Dorsolateral prefrontal cortex (tissue), 120 donors: ENCODE measurements at regions of chr9 and their contacts with region 1.

Region 1: GRCh38 chr9:127402401-127403090 is 5.6 kb downstream of the SLC2A8 start:
- DNase-seq: peak in 6 of 10 donors; percentile 40 to 73 (median 52)
- H3K4me3 ChIP-seq: peak overlapping the region in 3 of 59 donors; percentile 1 to 21 (median 6)
- H3K27ac ChIP-seq: peak overlapping the region in 53 of 59 donors; percentile 10 to 91 (median 72)
- H3K27me3 ChIP-seq: no peaks in the 10 kb centered on the region
- CTCF ChIP-seq: no peak

Region 2: GRCh38 chr9:127233550-127233949 is 169.0 kb before region 1 on chr9:
- intact Hi-C with region 1: loop called in 1 of 2 experiments (anchors 5 kb)
- DNase-seq: no peak
- H3K4me3 ChIP-seq: no peak overlapping the region
- H3K27ac ChIP-seq: peak overlapping the region in 7 of 59 donors; percentile 2 to 36 (median 15)
- H3K27me3 ChIP-seq: no peaks in the 10 kb centered on the region
- CTCF ChIP-seq: no peak

Region 3: DNA sequence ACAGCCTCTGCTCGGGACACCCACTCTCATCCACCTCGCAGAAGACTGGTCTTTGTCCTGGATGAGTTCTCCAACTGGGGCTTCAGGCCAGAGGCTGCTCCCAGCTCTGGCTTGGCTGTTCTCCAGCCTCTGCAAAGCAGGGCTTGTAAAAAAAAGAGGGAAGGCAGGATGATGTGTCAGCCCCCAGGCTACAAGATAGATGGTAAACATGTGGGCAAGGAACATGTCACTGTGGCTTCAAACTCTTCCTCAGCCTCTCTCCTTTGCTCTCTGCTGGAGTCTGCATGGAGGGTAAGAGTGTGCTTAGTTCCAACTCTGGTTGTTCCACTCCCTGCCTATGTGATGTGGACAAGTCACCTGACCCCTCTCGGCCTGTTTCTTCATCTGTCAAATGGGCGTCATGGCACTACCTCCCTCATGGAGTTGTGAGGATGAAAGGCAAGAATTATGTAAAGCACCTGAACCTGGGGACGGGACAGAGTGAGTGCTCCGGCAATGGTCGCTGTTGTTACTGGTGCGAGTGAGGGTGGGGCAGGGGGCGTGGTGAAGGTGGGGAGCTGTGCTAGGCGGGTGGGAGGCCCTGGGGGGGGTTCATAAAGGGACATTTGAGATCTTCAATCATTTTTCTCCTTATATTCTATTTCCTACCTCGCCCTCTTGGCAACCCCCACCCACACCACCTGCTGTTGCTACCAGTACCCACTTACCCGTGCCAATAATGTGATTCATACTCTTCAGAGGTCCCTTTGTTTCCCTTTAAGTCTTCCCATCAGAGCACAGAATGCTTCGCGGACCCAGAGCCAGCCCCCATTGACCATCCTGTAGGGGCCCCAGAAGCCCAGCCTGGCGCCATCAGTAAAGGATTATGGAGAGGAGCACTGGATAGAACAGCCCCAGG is 14.8 kb after region 1 on chr9:
- intact Hi-C with region 1: loop called in 1 of 2 experiments (anchors 2 kb)
- DNase-seq: no peak
- H3K4me3 ChIP-seq: no peak overlapping the region
- H3K27ac ChIP-seq: peak overlapping the region in 13 of 59 donors; percentile 9 to 66 (median 39)
- H3K27me3 ChIP-seq: no peaks in the 10 kb centered on the region
- CTCF ChIP-seq: no peak

Region 4: GRCh38 chr9:127608104-127608966 is 205.8 kb after region 1 on chr9:
- intact Hi-C with region 1: no loop called
- DNase-seq: peak; percentile 64 to 97 (median 86)
- H3K4me3 ChIP-seq: peak overlapping the region; percentile 33 to 73 (median 59)
- H3K27ac ChIP-seq: peak overlapping the region in 58 of 59 donors; percentile 20 to 94 (median 82)
- H3K27me3 ChIP-seq: no peaks in the 10 kb centered on the region
- CTCF ChIP-seq: peak in 10 of 56 donors; percentile 10 to 34 (median 19)

Region 5: GRCh38 chr9:127644943-127645342 is 242.4 kb after region 1 on chr9:
- intact Hi-C with region 1: no loop called
- DNase-seq: no peak
- H3K4me3 ChIP-seq: no peak overlapping the region
- H3K27ac ChIP-seq: peak overlapping the region in 1 of 59 donors; percentile 36
- H3K27me3 ChIP-seq: no peaks in the 10 kb centered on the region
- CTCF ChIP-seq: no peak

Region 6: GRCh38 chr9:127723450-127723849 is 320.9 kb after region 1 on chr9:
- intact Hi-C with region 1: no loop called
- DNase-seq: no peak
- H3K4me3 ChIP-seq: no peak overlapping the region
- H3K27ac ChIP-seq: no peak overlapping the region
- H3K27me3 ChIP-seq: no peaks in the 10 kb centered on the region
- CTCF ChIP-seq: no peak